ENCODE measurements at regions of chrX and their contacts with region 1.

Region 1: DNA sequence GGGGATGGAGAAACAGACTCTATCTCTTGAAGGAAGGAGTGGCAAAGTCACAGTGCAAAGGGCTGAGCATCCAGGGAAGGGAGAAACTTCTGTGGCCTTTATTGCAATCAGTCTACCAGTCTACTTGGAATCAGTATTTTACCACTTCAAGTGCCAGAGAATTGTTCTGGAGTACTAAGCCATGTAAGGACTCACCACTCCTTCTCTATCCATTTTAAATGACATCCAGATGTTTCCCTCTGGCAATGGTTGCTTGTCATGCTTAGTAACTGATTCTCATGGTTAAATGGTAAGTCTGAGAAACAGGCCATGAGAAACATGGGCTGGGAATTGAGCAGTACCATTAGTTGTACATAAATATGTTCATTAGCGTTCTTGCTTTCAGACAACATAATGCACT is 21.1 kb upstream of the SMIM10 start:
- DNase-seq: no peak
- ATAC-seq: no peak
- H3K4me3 ChIP-seq: no peak overlapping the region
- H3K4me1 ChIP-seq: no peaks in the 10 kb centered on the region
- CTCF ChIP-seq: no peak

Region 2: GRCh38 chrX:135086197-135086854 is 116.6 kb after region 1 on chrX:
- intact Hi-C with region 1: loop called (anchors 10 kb)
- DNase-seq: peak in 1 of 3 donors; percentile 62
- ATAC-seq: peak; percentile 86
- H3K4me3 ChIP-seq: no peak overlapping the region
- H3K4me1 ChIP-seq: no peaks in the 10 kb centered on the region
- CTCF ChIP-seq: no peak

Region 3: GRCh38 chrX:135178636-135179035 is 208.9 kb after region 1 on chrX:
- intact Hi-C with region 1: no loop called
- DNase-seq: no peak
- ATAC-seq: no peak
- H3K4me3 ChIP-seq: no peak overlapping the region
- H3K4me1 ChIP-seq: no peaks in the 10 kb centered on the region
- CTCF ChIP-seq: no peak

Measured in mucosa of descending colon (tissue), 3 donors.